HepG2 (cell line): ENCODE measurements at regions of chr2 and their contacts with region 1.

Region 1: GRCh38 chr2:185279999-185280398 is 458.6 kb upstream of the FSIP2 start:
- DNase-seq: peak; percentile 16
- ATAC-seq: 0 out of 3 replicates have a peak, but pooled peaks have one; percentile 33
- H3K4me3 ChIP-seq: no peak overlapping the region
- H3K27ac ChIP-seq: no peak overlapping the region
- H3K4me1 ChIP-seq: no peaks in the 10 kb centered on the region
- H3K27me3 ChIP-seq: no peaks in the 10 kb centered on the region
- CTCF ChIP-seq: peak; percentile 44
- EP300 ChIP-seq: no peak
- POLR2A ChIP-seq: no peak
- RAD21 ChIP-seq: no peak

Region 2: DNA sequence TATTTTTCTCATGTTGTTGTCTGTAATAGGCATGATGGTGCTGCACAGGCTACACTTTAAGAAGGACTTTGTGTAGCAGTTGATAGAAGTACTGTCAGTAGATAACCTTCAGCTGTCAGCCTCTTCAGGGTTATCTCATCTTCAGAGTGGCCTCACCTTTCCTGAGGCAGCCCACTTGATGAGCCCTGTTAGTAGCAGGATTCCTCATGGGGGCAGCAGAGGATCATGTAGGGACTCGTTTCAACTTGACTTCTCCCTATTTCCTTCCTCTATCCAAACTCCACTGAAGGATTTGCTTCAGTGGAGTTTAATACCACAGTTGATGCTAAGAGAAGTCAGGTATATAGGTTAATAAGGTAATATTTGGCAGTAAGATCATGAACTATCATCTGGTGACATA is 71.7 kb before region 1 on chr2:
- CTCF ChIA-PET with region 1: interaction called, 24 read pairs
- POLR2A ChIA-PET with region 1: no interaction called
- in situ Hi-C with region 1: no loop called
- intact Hi-C with region 1: loop called (anchors 1 kb)
- DNase-seq: peak; percentile 60
- ATAC-seq: peak; percentile 99
- H3K4me3 ChIP-seq: no peak overlapping the region
- H3K27ac ChIP-seq: no peak overlapping the region
- H3K4me1 ChIP-seq: no peaks in the 10 kb centered on the region
- H3K27me3 ChIP-seq: no peaks in the 10 kb centered on the region
- CTCF ChIP-seq: peak; percentile 82
- EP300 ChIP-seq: no peak
- POLR2A ChIP-seq: no peak
- RAD21 ChIP-seq: peak; percentile 60; the same call in 1 of the 2 replicates

Region 3: GRCh38 chr2:185291035-185291647 is 11.1 kb after region 1 on chr2:
- CTCF ChIA-PET with region 1: no interaction called
- POLR2A ChIA-PET with region 1: no interaction called
- in situ Hi-C with region 1: no loop called
- intact Hi-C with region 1: no loop called
- DNase-seq: peak; percentile 64
- ATAC-seq: peak; percentile 100
- H3K4me3 ChIP-seq: no peak overlapping the region
- H3K27ac ChIP-seq: no peak overlapping the region
- H3K4me1 ChIP-seq: peaks cover 10% of the 10 kb centered on the region
- H3K27me3 ChIP-seq: no peaks in the 10 kb centered on the region
- CTCF ChIP-seq: peak; percentile 74
- EP300 ChIP-seq: no peak
- POLR2A ChIP-seq: no peak
- RAD21 ChIP-seq: peak; percentile 74

Region 4: GRCh38 chr2:185335879-185336278 is 55.9 kb after region 1 on chr2:
- CTCF ChIA-PET with region 1: no interaction called
- POLR2A ChIA-PET with region 1: no interaction called
- in situ Hi-C with region 1: no loop called
- intact Hi-C with region 1: no loop called
- DNase-seq: no peak
- ATAC-seq: no peak
- H3K4me3 ChIP-seq: no peak overlapping the region
- H3K27ac ChIP-seq: no peak overlapping the region
- H3K4me1 ChIP-seq: no peaks in the 10 kb centered on the region
- H3K27me3 ChIP-seq: no peaks in the 10 kb centered on the region
- CTCF ChIP-seq: no peak
- EP300 ChIP-seq: no peak
- POLR2A ChIP-seq: no peak
- RAD21 ChIP-seq: no peak

Region 5: DNA sequence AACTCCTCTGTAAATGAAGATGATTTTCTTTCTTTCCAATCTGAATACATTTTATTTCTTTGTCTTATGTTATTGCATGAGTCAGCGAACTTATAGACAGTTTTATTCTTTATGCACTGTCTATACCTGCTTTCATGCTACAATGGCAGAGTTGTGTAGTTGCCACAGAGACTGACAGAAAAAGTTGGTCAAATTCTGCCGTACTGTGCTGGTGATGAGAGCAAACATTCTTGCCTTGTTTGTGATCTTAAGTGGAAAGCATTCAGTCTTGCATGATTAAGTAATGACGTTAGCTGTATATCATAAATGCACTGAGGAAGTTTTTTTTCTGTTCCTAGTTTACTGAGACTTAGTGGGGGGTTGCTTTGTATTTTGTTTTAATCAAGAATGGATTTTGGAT is 1238.9 kb after region 1 on chr2:
- CTCF ChIA-PET with region 1: no interaction called
- POLR2A ChIA-PET with region 1: no interaction called
- in situ Hi-C with region 1: no loop called
- intact Hi-C with region 1: no loop called
- DNase-seq: no peak
- ATAC-seq: no peak
- H3K4me3 ChIP-seq: no peak overlapping the region
- H3K27ac ChIP-seq: no peak overlapping the region
- H3K4me1 ChIP-seq: no peaks in the 10 kb centered on the region
- H3K27me3 ChIP-seq: no peaks in the 10 kb centered on the region
- CTCF ChIP-seq: no peak
- EP300 ChIP-seq: no peak
- POLR2A ChIP-seq: no peak
- RAD21 ChIP-seq: no peak